Activated CD8-positive, alpha-beta memory T cell treated with anti-CD3 and anti-CD28 coated beads, Interleukin-2, amount 10 ng/mL, durations not matched to agents 7 days and 5 days (primary cell): ENCODE measurements at regions of chr10 and their contacts with region 1.

Region 1: GRCh38 chr10:68315582-68315981 is 16.3 kb upstream of the HNRNPH3 start:
- DNase-seq: no peak
- ATAC-seq: no peak
- H3K4me3 Mint-ChIP-seq: no peak overlapping the region
- H3K27ac Mint-ChIP-seq: no peak overlapping the region
- H3K4me1 Mint-ChIP-seq: peaks cover 9% of the 10 kb centered on the region
- H3K27me3 Mint-ChIP-seq: no peaks in the 10 kb centered on the region

Region 2: GRCh38 chr10:68271196-68271882 is 44.2 kb before region 1 on chr10:
- CTCF ChIA-PET with region 1: no interaction called
- DNase-seq: no peak
- ATAC-seq: no peak
- H3K4me3 Mint-ChIP-seq: no peak overlapping the region
- H3K27ac Mint-ChIP-seq: no peak overlapping the region
- H3K4me1 Mint-ChIP-seq: peaks cover 2% of the 10 kb centered on the region
- H3K27me3 Mint-ChIP-seq: peaks cover 8% of the 10 kb centered on the region

Region 3: GRCh38 chr10:68301790-68302502 is 13.6 kb before region 1 on chr10:
- CTCF ChIA-PET with region 1: interaction called, 19 read pairs
- DNase-seq: no peak
- ATAC-seq: peak; percentile 58
- H3K4me3 Mint-ChIP-seq: no peak overlapping the region
- H3K27ac Mint-ChIP-seq: no peak overlapping the region
- H3K4me1 Mint-ChIP-seq: no peaks in the 10 kb centered on the region
- H3K27me3 Mint-ChIP-seq: no peaks in the 10 kb centered on the region